ENCODE measurements at regions of chr11 and their contacts with region 1.

Region 1: GRCh38 chr11:128776424-128777284 is 82.8 kb downstream of the FLI1 start:
- DNase-seq: no peak
- H3K4me3 ChIP-seq: no peak overlapping the region
- CTCF ChIP-seq: peak; percentile 81

Region 2: DNA sequence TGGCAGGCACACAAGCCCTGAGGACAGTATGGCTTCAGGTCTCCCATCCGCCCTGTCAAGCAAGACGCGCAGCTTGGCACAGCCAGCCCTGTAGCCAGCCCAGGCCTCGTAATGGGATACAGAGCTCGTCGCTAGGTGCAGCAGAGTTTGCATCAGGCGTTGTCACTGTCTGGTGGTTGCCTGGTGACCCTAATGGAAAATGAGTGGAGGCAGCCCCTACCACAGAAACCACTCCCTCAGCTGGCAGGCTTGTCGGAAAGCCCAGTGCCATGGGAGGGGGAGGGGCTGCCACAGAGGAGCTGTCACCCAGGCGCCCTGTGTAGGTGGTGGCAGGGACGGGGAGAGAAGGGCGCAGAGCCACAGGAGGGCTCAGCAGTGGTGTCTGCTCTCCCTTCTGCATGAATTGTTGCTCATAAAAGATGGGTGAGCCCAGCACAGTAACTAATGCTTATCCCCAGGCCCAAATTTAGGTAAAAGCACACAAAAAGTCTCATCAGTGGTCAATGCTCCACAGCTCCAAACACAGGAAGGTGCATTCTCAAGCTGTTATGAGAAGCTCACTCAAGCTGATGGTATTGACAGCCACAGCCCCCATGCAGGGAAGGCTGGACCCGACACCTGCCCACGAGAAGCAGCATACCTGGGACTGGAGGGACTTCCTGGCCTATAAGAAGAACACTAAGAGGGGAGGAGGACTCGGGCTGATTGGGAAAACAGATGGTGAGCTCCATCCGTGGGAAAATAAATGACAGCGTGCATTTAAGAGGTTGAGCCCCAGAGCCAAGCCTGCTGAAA is 353.9 kb before region 1 on chr11:
- in situ Hi-C with region 1: no loop called
- DNase-seq: no peak
- H3K4me3 ChIP-seq: no peak overlapping the region
- CTCF ChIP-seq: no peak

Region 3: GRCh38 chr11:128709402-128709801 is 67.3 kb before region 1 on chr11:
- in situ Hi-C with region 1: no loop called
- DNase-seq: peak; percentile 95
- H3K4me3 ChIP-seq: no peak overlapping the region
- CTCF ChIP-seq: no peak

Region 4: DNA sequence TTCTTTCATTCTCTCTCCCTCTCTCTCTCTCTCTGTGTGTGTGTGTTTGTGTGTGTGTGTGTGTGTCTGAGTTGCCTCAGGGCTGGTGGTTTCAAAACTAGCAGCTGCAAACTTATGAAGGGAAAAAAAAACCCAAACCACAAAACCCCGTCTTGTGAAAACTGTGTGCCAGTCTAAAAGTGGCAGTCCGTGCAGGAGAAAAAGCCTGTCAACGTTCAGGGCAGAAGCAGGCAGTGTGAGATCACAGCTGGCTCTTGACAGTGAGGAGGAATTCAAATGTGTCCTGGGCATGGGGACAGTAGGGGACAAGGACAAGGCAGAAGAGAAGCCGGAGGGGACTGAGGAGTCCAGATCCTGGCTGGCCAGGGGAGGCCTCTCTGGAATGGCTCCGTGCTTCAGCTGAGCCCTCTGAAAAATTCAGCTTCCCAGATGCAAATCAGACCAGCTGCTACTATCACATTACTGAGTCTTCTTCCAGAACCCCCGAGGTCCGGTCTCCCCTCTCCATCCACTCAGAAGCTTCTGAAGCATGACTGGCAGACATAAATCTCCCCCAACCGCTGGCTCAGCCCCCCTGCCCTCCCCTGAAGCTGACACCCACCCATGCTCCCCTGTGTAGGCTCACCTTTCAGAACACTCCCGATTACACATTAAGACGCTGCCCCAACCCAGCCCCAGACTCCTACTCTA is 50.9 kb before region 1 on chr11:
- in situ Hi-C with region 1: loop called (anchors 10 kb)
- DNase-seq: no peak
- H3K4me3 ChIP-seq: no peak overlapping the region
- CTCF ChIP-seq: no peak

Measured in astrocyte of the cerebellum (primary cell).